Activated naive CD4-positive, alpha-beta T cell treated with anti-CD3 and anti-CD28 coated beads for 36 hours (primary cell): ENCODE measurements at regions of chr19 and their contacts with region 1.

Region 1: GRCh38 chr19:40662921-40663694 is 27.3 kb downstream of the NUMBL start:
- DNase-seq: peak; percentile 91
- H3K4me3 Mint-ChIP-seq: peak overlapping the region; percentile 78
- H3K27ac Mint-ChIP-seq: peak overlapping the region; percentile 71
- H3K4me1 Mint-ChIP-seq: peaks cover 20% of the 10 kb centered on the region
- H3K27me3 Mint-ChIP-seq: no peaks in the 10 kb centered on the region

Region 2: DNA sequence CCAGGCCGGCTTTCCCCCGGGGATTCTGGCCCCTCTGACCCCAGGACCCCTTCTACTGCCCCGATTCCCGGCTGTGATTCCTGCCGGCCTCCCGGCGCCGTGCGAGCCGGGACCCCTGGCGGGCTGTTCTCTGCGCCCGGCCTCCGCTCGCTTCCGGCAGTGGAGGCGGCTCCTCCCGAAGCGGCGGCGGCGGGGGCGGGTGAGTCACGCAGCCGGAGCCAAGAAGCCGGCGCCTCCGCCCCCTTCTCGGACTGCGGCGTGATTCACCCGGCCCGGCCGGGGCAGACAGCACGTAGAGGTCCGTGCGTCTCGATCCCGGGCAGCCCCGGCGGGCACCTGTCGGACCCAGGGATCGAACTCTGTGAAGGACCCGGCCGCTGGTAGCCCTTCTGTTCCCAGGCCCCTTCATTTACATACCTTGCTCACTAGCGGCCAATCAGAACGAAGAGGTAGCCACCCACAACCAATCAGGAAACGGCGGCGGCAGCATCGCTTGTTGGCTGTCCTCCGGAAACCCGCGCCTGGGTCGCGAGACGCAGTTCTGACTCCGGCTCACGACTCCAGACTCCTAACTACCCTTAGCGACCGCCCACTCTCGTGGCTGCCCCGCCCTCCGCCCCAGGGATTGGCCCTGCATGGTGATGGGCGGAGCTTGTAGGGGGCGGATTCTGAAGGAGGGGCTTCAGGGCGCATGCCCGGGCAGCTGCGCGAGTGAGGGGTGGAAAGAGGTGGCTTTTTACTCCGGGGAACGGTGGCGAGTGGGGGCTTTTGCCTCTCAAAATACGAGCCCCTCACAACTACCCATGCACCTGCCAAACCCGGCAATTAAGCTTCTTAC is 237.4 kb before region 1 on chr19 and contains the start of gene SERTAD1:
- CTCF ChIA-PET with region 1: no interaction called
- intact Hi-C with region 1: no loop called
- DNase-seq: peak; percentile 100
- H3K4me3 Mint-ChIP-seq: peak within 1 kb of the TSS; percentile 89
- H3K27ac Mint-ChIP-seq: peak within 1 kb of the TSS; percentile 97
- H3K4me1 Mint-ChIP-seq: peaks cover 21% of the 10 kb centered on the region
- H3K27me3 Mint-ChIP-seq: no peaks in the 10 kb centered on the region
- total RNA-seq, gene SERTAD1: 8.8 to 9.2 TPM

Region 3: GRCh38 chr19:40627486-40628279 is 35.4 kb before region 1 on chr19:
- CTCF ChIA-PET with region 1: no interaction called
- intact Hi-C with region 1: no loop called
- DNase-seq: no peak
- H3K4me3 Mint-ChIP-seq: no peak overlapping the region
- H3K27ac Mint-ChIP-seq: no peak overlapping the region
- H3K4me1 Mint-ChIP-seq: peaks cover 5% of the 10 kb centered on the region
- H3K27me3 Mint-ChIP-seq: no peaks in the 10 kb centered on the region

Region 4: DNA sequence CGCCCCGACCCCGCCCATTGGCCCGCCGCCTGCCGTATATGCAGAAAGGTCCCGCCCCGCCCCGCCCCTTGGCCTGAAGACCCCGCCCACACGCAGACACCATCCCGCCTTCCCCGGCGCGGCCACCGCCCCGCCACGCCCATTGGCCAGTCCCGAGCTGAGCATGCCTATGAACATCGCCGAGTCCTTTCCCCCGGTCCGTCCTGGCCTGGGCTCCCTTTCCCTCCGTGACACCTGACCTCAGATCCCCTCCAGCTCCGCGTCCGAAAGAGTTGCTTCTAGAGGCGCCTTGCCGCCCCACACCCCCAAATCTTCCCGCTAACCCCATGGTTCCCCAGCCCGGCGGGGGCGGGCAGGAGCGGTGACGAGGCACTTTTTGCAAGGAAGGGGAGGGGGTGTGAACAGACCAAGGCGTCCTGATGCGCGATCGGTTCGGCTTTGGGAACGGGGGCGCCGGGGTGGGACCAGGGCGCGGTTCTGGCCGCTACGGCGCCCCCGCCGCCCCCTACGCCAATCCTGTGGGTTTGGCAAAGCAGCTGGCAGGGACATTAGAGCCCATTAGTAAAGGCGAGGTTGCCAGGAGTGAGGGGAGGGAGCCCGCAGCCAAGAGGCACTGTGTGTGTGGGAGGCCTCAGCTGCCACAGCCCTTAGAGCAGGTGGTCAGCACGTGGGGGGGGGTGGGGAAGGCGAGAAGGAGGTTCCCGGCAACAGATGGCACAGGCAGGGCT is 27.7 kb after region 1 on chr19:
- CTCF ChIA-PET with region 1: interaction called, 5 read pairs
- intact Hi-C with region 1: loop called (anchors 2 kb)
- DNase-seq: peak; percentile 93
- H3K4me3 Mint-ChIP-seq: peak overlapping the region; percentile 87
- H3K27ac Mint-ChIP-seq: peak overlapping the region; percentile 95
- H3K4me1 Mint-ChIP-seq: peaks cover 7% of the 10 kb centered on the region
- H3K27me3 Mint-ChIP-seq: no peaks in the 10 kb centered on the region

Region 5: DNA sequence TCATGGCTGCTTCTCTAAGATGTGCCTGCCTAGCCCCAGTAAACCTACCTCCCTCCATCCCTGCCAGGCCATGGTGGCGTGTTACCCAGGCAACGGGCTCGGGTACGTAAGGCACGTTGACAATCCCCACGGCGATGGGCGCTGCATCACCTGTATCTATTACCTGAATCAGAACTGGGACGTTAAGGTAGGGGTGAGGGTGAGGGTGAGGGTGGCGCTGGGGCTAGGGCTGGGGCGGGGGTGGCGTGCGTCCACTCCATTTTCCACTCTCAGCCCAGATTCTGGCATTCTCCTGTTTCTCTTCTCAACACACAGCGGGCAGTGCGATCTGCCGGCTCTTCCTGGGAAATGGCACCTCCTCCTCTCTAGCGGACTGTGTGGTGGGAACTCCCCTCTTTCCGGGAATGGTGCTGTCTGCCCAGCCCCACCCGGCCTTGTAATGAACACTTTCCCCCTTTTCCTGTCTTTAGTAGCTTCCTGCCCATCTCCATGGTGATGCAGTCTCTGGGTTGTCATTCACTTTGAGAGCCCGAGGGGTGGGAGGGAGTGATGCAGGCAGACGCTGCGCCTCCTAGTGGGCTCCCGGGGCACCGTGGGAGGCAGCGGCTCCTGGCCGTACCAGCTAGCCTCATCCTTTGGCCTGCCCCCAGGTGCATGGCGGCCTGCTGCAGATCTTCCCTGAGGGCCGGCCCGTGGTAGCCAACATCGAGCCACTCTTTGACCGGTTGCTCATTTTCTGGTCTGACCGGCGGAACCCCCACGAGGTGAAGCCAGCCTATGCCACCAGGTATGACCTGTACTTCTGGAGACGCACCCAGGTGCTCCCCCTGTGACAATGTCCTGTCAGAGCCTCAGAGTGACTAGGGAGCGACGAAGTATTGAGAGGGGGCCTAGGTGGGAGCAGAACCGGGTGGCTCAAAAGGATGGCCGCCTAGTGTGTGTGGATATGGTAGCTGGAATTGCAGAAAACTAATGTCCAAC is 143.7 kb after region 1 on chr19:
- CTCF ChIA-PET with region 1: interaction called, 30 read pairs
- intact Hi-C with region 1: no loop called
- DNase-seq: peak; percentile 90
- H3K4me3 Mint-ChIP-seq: peak overlapping the region; percentile 67
- H3K27ac Mint-ChIP-seq: peak overlapping the region; percentile 93
- H3K4me1 Mint-ChIP-seq: peaks cover 81% of the 10 kb centered on the region
- H3K27me3 Mint-ChIP-seq: no peaks in the 10 kb centered on the region

Region 6: GRCh38 chr19:40813182-40813958 is 150.3 kb after region 1 on chr19:
- CTCF ChIA-PET with region 1: interaction called, 44 read pairs
- intact Hi-C with region 1: no loop called
- DNase-seq: no peak
- H3K4me3 Mint-ChIP-seq: no peak overlapping the region
- H3K27ac Mint-ChIP-seq: no peak overlapping the region
- H3K4me1 Mint-ChIP-seq: peaks cover 35% of the 10 kb centered on the region
- H3K27me3 Mint-ChIP-seq: no peaks in the 10 kb centered on the region

Region 7: DNA sequence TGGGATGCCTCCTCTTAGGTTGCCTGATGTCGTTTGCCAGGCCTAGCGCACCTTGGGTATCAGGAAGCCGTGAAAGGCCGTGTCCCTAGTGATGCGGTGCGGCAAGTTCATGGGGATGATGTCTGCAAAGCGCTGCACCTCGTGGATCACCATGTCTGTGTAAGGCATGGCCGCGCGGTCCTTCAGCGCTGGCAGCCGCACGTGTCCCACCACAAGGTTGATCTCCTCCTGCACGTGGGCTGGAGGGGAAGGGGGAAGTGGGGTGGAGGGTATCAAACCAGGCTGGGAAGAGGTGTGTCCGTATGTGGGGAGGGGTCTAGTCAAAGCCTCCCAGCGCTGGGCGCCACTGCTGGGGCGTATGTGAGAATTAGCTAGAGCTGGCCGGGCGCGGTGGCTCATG is 159.1 kb after region 1 on chr19:
- CTCF ChIA-PET with region 1: interaction called, 44 read pairs
- intact Hi-C with region 1: loop called (anchors 1 kb)
- DNase-seq: no peak
- H3K4me3 Mint-ChIP-seq: no peak overlapping the region
- H3K27ac Mint-ChIP-seq: no peak overlapping the region
- H3K4me1 Mint-ChIP-seq: peaks cover 37% of the 10 kb centered on the region
- H3K27me3 Mint-ChIP-seq: no peaks in the 10 kb centered on the region

Region 8: DNA sequence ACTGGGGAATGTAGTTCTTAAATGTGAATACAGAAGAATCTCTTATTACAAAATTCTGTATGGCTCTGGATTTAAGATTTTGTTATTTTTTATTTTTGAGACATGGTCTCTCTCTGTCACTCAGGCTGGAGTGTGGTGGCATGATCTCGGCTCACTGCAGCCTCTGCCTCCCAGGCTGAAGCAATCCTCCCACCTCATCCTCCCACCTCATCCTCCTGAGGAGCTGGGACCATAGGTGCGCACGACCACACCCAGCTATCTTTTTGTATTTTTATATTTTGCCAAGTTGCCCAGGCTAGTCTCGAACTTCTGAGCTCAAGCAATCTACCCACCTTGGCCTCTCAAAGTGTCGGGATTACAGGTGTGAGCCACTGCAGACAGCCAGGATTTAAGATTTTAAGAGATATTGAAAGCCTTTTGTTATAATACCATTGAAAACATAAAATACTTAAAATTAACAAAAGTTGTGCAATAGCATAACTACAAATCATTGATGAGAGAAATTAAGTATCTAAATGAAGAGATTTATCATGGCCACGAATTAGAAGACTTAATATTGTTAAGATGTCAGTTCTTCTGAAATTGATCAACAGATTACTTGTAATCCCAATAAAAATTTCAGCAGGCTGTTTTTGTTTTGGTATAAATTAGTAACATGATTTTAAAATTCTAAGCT is 173.8 kb after region 1 on chr19:
- CTCF ChIA-PET with region 1: no interaction called
- intact Hi-C with region 1: no loop called
- DNase-seq: no peak
- H3K4me3 Mint-ChIP-seq: no peak overlapping the region
- H3K27ac Mint-ChIP-seq: no peak overlapping the region
- H3K4me1 Mint-ChIP-seq: peaks cover 13% of the 10 kb centered on the region
- H3K27me3 Mint-ChIP-seq: no peaks in the 10 kb centered on the region

Region 9: GRCh38 chr19:40908976-40909375 is 245.9 kb after region 1 on chr19:
- CTCF ChIA-PET with region 1: interaction called, 10 read pairs
- intact Hi-C with region 1: loop called (anchors 5 kb)
- DNase-seq: peak; percentile 71
- H3K4me3 Mint-ChIP-seq: peak overlapping the region; percentile 71
- H3K27ac Mint-ChIP-seq: no peak overlapping the region
- H3K4me1 Mint-ChIP-seq: peaks cover 11% of the 10 kb centered on the region
- H3K27me3 Mint-ChIP-seq: peaks cover 8% of the 10 kb centered on the region

Region 10: GRCh38 chr19:41144403-41144802 is 481.3 kb after region 1 on chr19:
- CTCF ChIA-PET with region 1: no interaction called
- intact Hi-C with region 1: loop called (anchors 2 kb)
- DNase-seq: peak; percentile 95
- H3K4me3 Mint-ChIP-seq: no peak overlapping the region
- H3K27ac Mint-ChIP-seq: no peak overlapping the region
- H3K4me1 Mint-ChIP-seq: no peaks in the 10 kb centered on the region
- H3K27me3 Mint-ChIP-seq: peaks cover 3% of the 10 kb centered on the region